Breast epithelium (tissue), 4 donors: ENCODE measurements at regions of chrX and their contacts with region 1.

Region 1: GRCh38 chrX:22424122-22424915 is 151.6 kb downstream of the CBLL2 start:
- DNase-seq: no peak
- H3K4me3 ChIP-seq: no peak overlapping the region
- H3K27ac ChIP-seq: no peak overlapping the region
- H3K4me1 ChIP-seq: no peaks in the 10 kb centered on the region
- H3K27me3 ChIP-seq: peaks cover 0 to 6% of the 10 kb centered on the region in 2 donors
- CTCF ChIP-seq: no peak
- POLR2A ChIP-seq: no peak

Region 2: DNA sequence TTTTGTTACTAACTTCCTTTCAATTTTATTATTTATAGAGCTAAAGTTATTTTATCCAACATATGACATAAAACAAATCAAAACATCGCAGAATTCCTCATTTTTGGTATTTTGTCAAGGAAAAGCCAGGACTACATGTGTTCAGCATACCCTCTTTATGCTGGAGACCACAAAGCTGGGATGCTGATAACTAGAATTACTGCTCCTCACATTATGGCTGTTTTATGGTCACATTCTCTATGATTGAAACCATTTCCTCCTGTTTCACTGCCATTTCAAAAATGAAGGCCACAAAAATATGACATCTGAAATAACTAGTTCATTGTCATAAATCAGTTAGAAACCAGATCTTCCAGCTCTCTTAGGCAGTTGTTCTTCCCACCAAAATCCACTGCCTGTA is 807.9 kb before region 1 on chrX:
- intact Hi-C with region 1: loop called (anchors 5 kb)
- DNase-seq: no peak
- H3K4me3 ChIP-seq: no peak overlapping the region
- H3K27ac ChIP-seq: no peak overlapping the region
- H3K4me1 ChIP-seq: no peaks in the 10 kb centered on the region
- H3K27me3 ChIP-seq: peaks cover 0 to 28% of the 10 kb centered on the region in 2 donors
- CTCF ChIP-seq: no peak
- POLR2A ChIP-seq: no peak